ENCODE measurements at regions of chr19 and their contacts with region 1.

Region 1: DNA sequence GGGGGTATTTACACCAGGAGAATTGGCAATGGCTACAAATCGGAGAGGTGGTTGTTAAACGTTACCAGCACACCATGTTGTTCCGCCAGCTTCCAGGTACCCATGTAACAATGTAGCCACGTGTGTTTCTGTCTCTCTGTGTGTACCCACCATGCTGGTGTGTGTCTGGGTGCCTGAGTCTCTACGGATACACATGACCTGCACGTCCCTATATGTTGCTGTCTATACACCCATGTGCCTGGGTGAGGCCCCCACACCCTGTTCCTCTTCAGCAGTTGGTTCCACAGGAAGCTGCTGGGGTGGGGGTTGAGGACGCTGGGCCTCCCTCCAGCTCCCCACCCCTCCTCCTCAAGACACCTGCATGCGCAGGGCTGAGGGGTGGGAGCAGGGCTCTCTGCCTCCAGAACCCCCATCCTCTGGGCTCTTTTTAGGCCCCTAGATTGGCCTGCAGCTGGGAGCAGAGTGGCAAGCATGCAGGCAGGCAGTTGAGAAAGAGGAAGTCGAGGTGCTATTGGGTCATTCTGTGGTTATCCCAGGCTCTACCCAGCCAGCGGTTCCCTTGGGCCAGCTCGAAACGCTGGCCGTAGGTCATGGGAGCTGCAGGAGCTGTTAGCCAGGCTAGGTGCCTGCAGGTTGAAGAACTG is at the start of gene ARHGEF18:
- DNase-seq: peak in 8 of 9 donors; percentile 40 to 89 (median 84)
- ATAC-seq: peak; percentile 77
- H3K4me3 ChIP-seq: peak within 1 kb of the TSS; percentile 99
- H3K4me3 Mint-ChIP-seq: peak within 1 kb of the TSS; percentile 83 to 100 (median 99)
- H3K27ac ChIP-seq: peak within 1 kb of the TSS; percentile 74
- H3K27ac Mint-ChIP-seq: peak within 1 kb of the TSS; percentile 86 to 100 (median 98)
- H3K4me1 ChIP-seq: peaks cover 28 to 44% of the 10 kb centered on the region in 2 donors
- H3K4me1 Mint-ChIP-seq: peaks cover 22 to 78% (median 62%) of the 10 kb centered on the region in 7 donors
- H3K27me3 ChIP-seq: no peaks in the 10 kb centered on the region
- H3K27me3 Mint-ChIP-seq: no peaks in the 10 kb centered on the region
- total RNA-seq, gene ARHGEF18: 53.0 to 132 (median 130) TPM

Region 2: GRCh38 chr19:7069042-7069903 is 279.4 kb before region 1 on chr19 and contains the start of gene ZNF557:
- CTCF ChIA-PET with region 1: no interaction called
- POLR2A ChIA-PET with region 1: interaction called, 12 read pairs
- intact Hi-C with region 1: no loop called
- DNase-seq: peak; percentile 93 to 100 (median 99)
- ATAC-seq: peak; percentile 99
- H3K4me3 ChIP-seq: peak within 1 kb of the TSS; percentile 100
- H3K4me3 Mint-ChIP-seq: peak within 1 kb of the TSS; percentile 90 to 98 (median 94)
- H3K27ac ChIP-seq: peak within 1 kb of the TSS; percentile 84
- H3K27ac Mint-ChIP-seq: peak within 1 kb of the TSS; percentile 63 to 95 (median 94)
- H3K4me1 ChIP-seq: peaks cover 14% of the 10 kb centered on the region in 2 donors
- H3K4me1 Mint-ChIP-seq: peaks cover 7 to 40% (median 19%) of the 10 kb centered on the region in 7 donors
- H3K27me3 ChIP-seq: no peaks in the 10 kb centered on the region
- H3K27me3 Mint-ChIP-seq: no peaks in the 10 kb centered on the region
- total RNA-seq, gene ZNF557: 11.7 to 36.2 (median 20.0) TPM

Region 3: GRCh38 chr19:7360393-7360984 is 11.8 kb after region 1 on chr19:
- CTCF ChIA-PET with region 1: interaction called, 9 read pairs
- POLR2A ChIA-PET with region 1: interaction called, 31 read pairs
- intact Hi-C with region 1: no loop called
- DNase-seq: no peak
- ATAC-seq: no peak
- H3K4me3 ChIP-seq: no peak overlapping the region
- H3K4me3 Mint-ChIP-seq: no peak overlapping the region
- H3K27ac ChIP-seq: peak overlapping the region; percentile 29
- H3K27ac Mint-ChIP-seq: peak overlapping the region in 6 of 9 donors; percentile 12 to 94 (median 28)
- H3K4me1 ChIP-seq: peaks cover 11 to 48% of the 10 kb centered on the region in 2 donors
- H3K4me1 Mint-ChIP-seq: peaks cover 22 to 92% (median 79%) of the 10 kb centered on the region in 7 donors
- H3K27me3 ChIP-seq: no peaks in the 10 kb centered on the region
- H3K27me3 Mint-ChIP-seq: no peaks in the 10 kb centered on the region

Region 4: DNA sequence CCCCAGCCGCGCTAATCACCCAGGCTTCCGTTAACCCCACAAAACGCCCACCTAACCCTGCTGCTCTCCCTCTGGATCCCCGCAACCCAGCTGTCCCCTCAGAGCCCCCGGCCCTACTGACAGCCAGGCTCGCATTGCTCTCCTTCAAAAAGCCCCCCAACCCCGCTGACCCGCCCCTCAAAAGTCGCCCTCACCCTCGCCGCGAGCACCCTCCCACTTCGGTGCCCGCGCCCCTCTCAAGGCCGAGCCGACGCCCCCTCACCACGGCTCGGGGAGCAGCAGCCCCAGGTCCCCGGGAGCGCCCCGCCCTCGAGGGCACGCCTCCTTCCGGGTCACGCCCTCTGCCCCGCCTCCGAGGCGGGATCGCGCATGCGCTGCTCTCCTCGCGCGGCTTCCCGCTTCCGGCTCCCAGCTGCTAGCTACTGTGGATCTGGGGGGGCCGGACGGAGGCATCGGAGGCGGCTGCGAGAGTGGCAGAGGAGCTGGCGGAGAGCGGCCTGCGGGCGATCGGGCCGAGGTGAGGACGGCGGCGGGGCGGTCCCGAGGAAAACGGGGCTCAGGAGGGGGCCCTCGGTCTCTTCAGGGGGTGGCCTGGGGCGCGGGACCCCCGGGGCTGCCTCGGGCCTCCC is 46.1 kb after region 1 on chr19:
- CTCF ChIA-PET with region 1: interaction called, 6 read pairs
- POLR2A ChIA-PET with region 1: interaction called, 7 read pairs
- intact Hi-C with region 1: loop called in 1 of 2 experiments (anchors 5 kb)
- DNase-seq: peak; percentile 85 to 99 (median 91)
- ATAC-seq: peak; percentile 94
- H3K4me3 ChIP-seq: peak overlapping the region; percentile 46
- H3K4me3 Mint-ChIP-seq: peak overlapping the region; percentile 67 to 91 (median 84)
- H3K27ac ChIP-seq: peak overlapping the region; percentile 69
- H3K27ac Mint-ChIP-seq: peak overlapping the region; percentile 50 to 85 (median 80)
- H3K4me1 ChIP-seq: peaks cover 5 to 32% of the 10 kb centered on the region in 2 donors
- H3K4me1 Mint-ChIP-seq: peaks cover 15 to 64% (median 50%) of the 10 kb centered on the region in 7 donors
- H3K27me3 ChIP-seq: no peaks in the 10 kb centered on the region
- H3K27me3 Mint-ChIP-seq: no peaks in the 10 kb centered on the region

Region 5: DNA sequence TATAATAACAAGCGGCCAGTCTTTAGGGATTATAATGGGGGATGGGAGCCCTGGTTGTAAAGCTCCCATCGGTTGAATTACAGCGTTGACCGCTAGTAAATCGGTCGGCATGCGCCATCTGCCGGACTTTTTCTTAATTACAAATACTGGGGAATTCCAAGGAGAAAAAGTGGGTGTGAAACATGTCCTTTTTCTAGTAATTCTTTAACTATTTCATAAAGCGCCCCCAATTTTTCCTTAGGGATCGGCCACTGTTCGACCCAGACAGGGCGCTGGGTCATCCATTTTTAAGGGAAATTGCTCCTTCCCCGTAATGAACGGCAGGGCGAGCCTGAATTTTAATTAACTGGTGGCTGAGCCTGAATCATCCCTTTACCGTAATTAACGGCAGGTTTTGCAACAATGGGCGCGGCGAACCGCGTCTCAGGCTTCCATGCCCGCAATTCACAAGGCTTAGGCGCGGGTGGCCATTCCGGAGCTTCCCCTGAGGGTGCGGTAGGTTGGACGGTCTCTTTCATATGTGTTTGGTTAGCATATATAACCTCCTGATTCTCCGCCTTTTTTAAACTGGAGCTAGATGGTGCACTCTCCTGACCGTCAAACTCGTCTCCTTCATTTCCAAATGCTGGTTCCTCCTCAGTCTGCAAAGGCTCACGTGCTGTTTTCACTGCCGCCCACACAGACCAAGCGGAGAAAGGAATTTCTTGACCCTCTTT is 451.1 kb after region 1 on chr19:
- CTCF ChIA-PET with region 1: no interaction called
- POLR2A ChIA-PET with region 1: no interaction called
- intact Hi-C with region 1: loop called in 1 of 2 experiments (anchors 5 kb)
- DNase-seq: peak; percentile 13 to 61 (median 39)
- ATAC-seq: peak; percentile 71
- H3K4me3 ChIP-seq: no peak overlapping the region
- H3K4me3 Mint-ChIP-seq: peak overlapping the region in 1 of 10 donors; percentile 23
- H3K27ac ChIP-seq: no peak overlapping the region
- H3K27ac Mint-ChIP-seq: peak overlapping the region in 1 of 9 donors; percentile 63
- H3K4me1 ChIP-seq: no peaks in the 10 kb centered on the region
- H3K4me1 Mint-ChIP-seq: peaks cover 0 to 8% (median 6%) of the 10 kb centered on the region in 7 donors
- H3K27me3 ChIP-seq: no peaks in the 10 kb centered on the region
- H3K27me3 Mint-ChIP-seq: peaks cover 0 to 44% (median 11%) of the 10 kb centered on the region in 5 donors

Measured in naive thymus-derived CD4-positive, alpha-beta T cell (primary cell).